Tibial artery (tissue), 4 donors: ENCODE measurements at regions of chr3 and their contacts with region 1.

Region 1: DNA sequence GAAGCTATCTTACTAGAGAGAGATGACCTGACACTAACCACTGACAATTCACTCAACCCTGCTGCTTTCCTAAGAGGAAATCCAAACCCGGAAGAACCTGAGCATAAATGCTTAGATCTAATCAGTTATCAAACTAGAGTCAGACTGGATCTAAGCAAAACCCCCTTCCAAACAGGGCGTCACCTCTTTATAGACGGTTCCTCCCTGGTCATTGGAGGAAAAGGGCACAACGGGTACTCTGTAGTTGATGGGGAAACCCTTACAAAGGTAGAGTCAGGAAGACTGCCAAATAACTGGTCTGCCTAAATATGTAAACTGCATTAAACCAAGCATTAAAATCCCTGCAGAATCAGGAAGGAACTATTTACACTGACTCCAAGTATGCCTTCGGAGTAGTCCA is 41.3 kb upstream of the FSTL1 start:
- DNase-seq: no peak
- H3K4me3 ChIP-seq: no peak overlapping the region
- H3K27ac ChIP-seq: no peak overlapping the region
- H3K4me1 ChIP-seq: peaks cover 0 to 23% (median 5%) of the 10 kb centered on the region in 4 donors
- H3K27me3 ChIP-seq: no peaks in the 10 kb centered on the region
- CTCF ChIP-seq: no peak

Region 2: DNA sequence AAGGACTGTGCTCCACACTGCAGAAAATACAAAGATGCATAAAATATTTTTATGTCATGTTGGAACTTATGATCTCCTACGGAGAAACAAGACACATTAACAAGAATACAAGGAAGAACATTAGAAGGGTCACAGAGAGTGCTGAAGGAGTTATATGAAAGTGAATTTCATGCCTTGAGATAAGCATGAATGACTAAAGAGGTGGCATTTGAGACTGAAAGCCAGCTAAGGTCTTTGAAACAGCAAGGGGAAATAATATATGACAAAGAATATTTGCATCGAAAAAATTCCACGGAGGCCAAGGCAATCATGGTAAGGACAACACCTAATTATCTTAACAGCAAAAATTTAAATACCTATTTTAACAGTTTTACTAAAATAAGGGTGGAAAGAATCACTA is 410.4 kb before region 1 on chr3:
- intact Hi-C with region 1: no loop called
- DNase-seq: no peak
- H3K4me3 ChIP-seq: no peak overlapping the region
- H3K27ac ChIP-seq: no peak overlapping the region
- H3K4me1 ChIP-seq: peaks cover 0 to 31% (median 11%) of the 10 kb centered on the region in 4 donors
- H3K27me3 ChIP-seq: no peaks in the 10 kb centered on the region
- CTCF ChIP-seq: no peak

Region 3: DNA sequence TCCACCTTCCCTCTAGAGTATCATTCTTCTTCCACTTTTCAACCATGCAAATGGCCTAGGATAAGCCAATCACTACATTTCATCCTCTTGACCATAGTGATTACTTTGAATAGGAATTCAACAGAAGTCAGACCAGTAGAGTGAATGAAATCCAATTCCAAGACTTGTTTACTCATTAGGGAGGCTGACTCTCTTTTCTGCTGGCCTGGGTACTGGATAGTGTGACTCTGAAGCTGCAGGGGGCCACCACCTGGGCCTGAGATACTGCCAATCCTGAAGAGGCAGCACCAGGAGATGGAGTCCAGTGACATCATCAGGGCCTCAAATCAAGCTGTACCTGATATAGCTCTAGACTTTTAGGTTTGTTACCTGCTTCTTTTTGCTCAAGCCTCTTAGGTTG is 34.3 kb before region 1 on chr3:
- intact Hi-C with region 1: loop called (anchors 5 kb)
- DNase-seq: no peak
- H3K4me3 ChIP-seq: no peak overlapping the region
- H3K27ac ChIP-seq: no peak overlapping the region
- H3K4me1 ChIP-seq: no peaks in the 10 kb centered on the region
- H3K27me3 ChIP-seq: no peaks in the 10 kb centered on the region
- CTCF ChIP-seq: no peak